ENCODE measurements at regions of chr2 and their contacts with region 1.

Region 1: DNA sequence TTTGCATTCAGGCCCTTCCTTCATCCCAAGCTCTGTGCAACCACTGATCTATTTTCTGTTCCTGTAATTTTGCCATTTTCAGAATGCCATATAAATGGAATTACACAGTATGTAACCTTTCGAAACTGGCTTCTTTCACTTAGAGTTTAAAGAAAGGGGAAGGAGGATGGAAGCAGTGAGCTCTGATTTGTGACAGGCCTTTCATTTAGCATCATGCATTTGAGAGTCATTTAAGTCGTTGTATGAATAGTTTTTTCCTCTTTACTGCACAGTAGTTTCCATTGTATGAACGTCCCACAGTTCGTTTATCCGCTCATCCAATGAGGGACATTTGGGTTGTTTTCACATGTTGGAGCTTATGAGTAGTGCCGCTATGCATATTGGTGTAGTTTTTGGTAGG is 67.0 kb downstream of the LBH start:
- DNase-seq: no peak
- H3K4me3 Mint-ChIP-seq: no peak overlapping the region
- H3K27ac Mint-ChIP-seq: peak overlapping the region; percentile 3
- H3K4me1 Mint-ChIP-seq: peaks cover 22% of the 10 kb centered on the region
- H3K27me3 Mint-ChIP-seq: no peaks in the 10 kb centered on the region

Region 2: DNA sequence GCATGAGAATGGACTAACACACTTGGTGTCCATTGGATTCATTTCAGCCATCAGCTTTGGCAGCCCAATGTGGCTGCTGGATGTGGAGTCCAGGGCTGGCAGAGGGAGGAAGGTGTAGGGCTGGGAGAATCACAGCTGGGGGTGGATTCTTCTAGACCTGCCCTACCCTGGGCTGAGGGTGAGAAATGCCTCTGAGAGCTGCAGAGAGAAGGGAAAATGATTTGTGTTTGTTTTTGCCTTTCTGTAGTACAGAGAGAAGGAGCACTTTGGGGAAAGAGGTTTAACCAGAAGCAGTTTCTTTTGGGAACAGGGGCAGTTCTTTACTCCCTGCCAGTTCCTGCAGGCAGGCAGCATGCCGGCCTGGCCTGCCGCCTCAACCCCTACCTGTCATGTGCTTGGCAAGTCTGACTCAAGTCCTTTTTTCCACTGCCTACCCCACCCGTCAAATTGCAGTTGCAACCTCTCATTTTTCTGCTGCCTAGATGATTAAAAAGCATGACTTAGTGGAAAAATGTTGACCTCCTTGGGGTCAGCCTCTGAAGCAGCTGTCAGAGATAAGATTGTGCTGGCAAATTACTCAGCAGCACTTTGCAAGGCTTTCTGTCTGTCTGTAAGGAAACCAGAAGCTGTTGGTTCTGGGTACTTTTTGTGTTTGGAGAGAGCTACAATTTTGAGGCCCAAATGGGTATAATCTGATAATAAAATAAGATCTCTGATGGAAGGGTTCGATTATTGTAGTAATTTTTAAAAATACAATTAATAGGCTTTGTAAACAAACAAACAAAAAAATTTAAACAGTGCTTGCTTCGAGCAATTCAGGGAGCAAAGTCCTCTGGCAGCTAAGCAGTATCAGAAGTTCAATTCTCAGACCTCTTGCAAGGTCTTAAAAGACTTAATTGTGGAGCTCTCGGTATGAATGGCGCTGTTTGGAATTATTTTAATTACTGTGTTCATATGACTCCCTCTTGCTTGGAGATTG is 45.3 kb before region 1 on chr2:
- CTCF ChIA-PET with region 1: interaction called, 3 read pairs
- POLR2A ChIA-PET with region 1: no interaction called
- intact Hi-C with region 1: loop called (anchors 1 kb)
- DNase-seq: peak; percentile 89
- H3K4me3 Mint-ChIP-seq: peak overlapping the region; percentile 33
- H3K27ac Mint-ChIP-seq: peak overlapping the region; percentile 92
- H3K4me1 Mint-ChIP-seq: peaks cover 96% of the 10 kb centered on the region
- H3K27me3 Mint-ChIP-seq: no peaks in the 10 kb centered on the region

Region 3: GRCh38 chr2:30273261-30273861 is 24.9 kb before region 1 on chr2:
- CTCF ChIA-PET with region 1: no interaction called
- POLR2A ChIA-PET with region 1: interaction called, 3 read pairs
- intact Hi-C with region 1: loop called (anchors 1 kb)
- DNase-seq: peak; percentile 64
- H3K4me3 Mint-ChIP-seq: peak overlapping the region; percentile 43
- H3K27ac Mint-ChIP-seq: peak overlapping the region; percentile 86
- H3K4me1 Mint-ChIP-seq: peaks cover 51% of the 10 kb centered on the region
- H3K27me3 Mint-ChIP-seq: no peaks in the 10 kb centered on the region